ENCODE measurements at regions of chr9 and their contacts with region 1.

Region 1: GRCh38 chr9:116112236-116112635 is 41.4 kb upstream of the PAPPA start:
- DNase-seq: no peak
- ATAC-seq: no peak
- H3K4me3 ChIP-seq: no peak overlapping the region
- H3K27ac ChIP-seq: no peak overlapping the region
- H3K4me1 ChIP-seq: no peaks in the 10 kb centered on the region
- H3K27me3 ChIP-seq: no peaks in the 10 kb centered on the region
- CTCF ChIP-seq: peak in 2 of 5 experiments; percentile 14 to 36
- POLR2A ChIP-seq: no peak

Region 2: DNA sequence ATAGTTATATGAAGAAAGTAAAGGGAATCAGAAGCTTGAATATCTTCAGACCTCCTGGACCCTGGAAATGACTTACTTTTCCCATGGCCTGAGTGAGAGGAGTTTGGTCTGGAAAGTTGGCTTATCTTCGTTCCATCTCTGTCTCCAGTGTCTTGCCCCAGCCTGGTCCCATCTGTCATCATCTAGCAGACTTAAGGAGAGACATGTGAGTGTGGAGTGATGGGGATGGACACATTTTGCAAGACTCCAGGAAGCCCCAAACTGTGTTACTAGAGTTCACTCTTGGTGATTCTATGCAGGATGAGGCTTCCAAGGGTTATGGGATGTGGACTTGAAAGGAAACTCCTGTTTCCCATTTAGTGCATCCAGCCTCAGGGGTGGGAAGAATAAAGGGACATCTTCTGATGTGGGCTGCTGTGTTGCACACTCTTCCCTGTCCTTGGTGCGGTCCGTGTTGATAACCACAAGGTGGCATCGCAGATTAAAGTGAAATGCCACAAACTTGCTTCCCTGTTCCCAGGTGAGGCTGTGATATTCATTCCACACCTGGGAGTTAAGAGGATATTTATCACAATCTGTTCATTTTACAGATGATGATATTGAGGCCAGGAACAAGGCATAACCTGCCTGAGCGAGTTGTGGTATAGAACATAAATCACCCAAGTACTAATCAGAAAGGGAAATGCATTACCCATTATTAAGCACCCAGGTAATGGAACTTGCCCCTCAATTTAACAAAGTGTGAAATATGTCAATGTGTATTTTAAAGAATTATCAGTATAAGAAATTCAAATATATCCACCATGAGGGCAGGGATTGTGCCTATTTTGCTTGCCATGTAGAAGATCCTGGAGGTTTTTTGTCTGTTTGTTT is 228.5 kb before region 1 on chr9:
- in situ Hi-C with region 1: loop called in 2 of 4 experiments (anchors 25 kb)
- intact Hi-C with region 1: loop called (anchors 1 kb)
- DNase-seq: no peak
- ATAC-seq: peak; percentile 62 to 66
- H3K4me3 ChIP-seq: no peak overlapping the region
- H3K27ac ChIP-seq: no peak overlapping the region
- H3K4me1 ChIP-seq: no peaks in the 10 kb centered on the region
- H3K27me3 ChIP-seq: no peaks in the 10 kb centered on the region
- CTCF ChIP-seq: peak; percentile 34 to 55 (median 41)
- POLR2A ChIP-seq: no peak

Region 3: DNA sequence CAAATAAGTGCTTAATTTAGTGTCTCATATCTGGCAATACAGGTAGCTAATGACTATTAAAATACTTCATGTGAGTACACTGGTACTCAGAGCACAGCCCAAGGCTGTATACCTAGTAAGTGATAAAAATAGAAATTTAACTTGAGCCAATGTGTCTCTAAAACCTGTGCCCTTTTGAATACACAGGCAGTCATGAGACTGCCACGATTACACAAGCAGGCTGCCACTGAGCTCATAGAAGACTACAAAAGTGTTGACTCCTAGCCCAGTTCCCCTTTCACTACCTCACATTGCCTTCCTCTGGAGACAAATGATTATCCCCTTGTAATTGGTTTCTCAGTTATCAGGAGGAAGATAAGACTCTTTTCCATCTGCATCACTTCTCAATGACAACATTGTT is 25.0 kb before region 1 on chr9:
- in situ Hi-C with region 1: no loop called
- intact Hi-C with region 1: loop called (anchors 2 kb)
- DNase-seq: peak; percentile 72 to 86
- ATAC-seq: peak; percentile 99
- H3K4me3 ChIP-seq: no peak overlapping the region
- H3K27ac ChIP-seq: peak overlapping the region; percentile 61 to 73 (median 66)
- H3K4me1 ChIP-seq: peaks cover 20 to 24% of the 10 kb centered on the region in 2 donors
- H3K27me3 ChIP-seq: no peaks in the 10 kb centered on the region
- CTCF ChIP-seq: no peak
- POLR2A ChIP-seq: no peak